ENCODE measurements at regions of chr2 and their contacts with region 1.

Region 1: GRCh38 chr2:43566461-43566729 is 29.4 kb downstream of the THADA start:
- DNase-seq: no peak
- ATAC-seq: no peak
- H3K4me3 ChIP-seq: no peak overlapping the region
- H3K27ac ChIP-seq: no peak overlapping the region
- H3K4me1 ChIP-seq: no peaks in the 10 kb centered on the region
- CTCF ChIP-seq: no peak
- EP300 ChIP-seq: no peak
- POLR2A ChIP-seq: no peak
- RAD21 ChIP-seq: no peak

Region 2: GRCh38 chr2:43576981-43577892 is 10.8 kb after region 1 on chr2:
- CTCF ChIA-PET with region 1: interaction called, 38 read pairs
- POLR2A ChIA-PET with region 1: no interaction called
- DNase-seq: peak; percentile 46 to 77
- ATAC-seq: peak; percentile 59 to 67; a peak in 5 of 6 replicates
- H3K4me3 ChIP-seq: no peak overlapping the region
- H3K27ac ChIP-seq: 0 out of 6 replicates have a peak overlapping the region, but pooled peaks of 1 of the 2 experiments have one; percentile 14
- H3K4me1 ChIP-seq: no peaks in the 10 kb centered on the region
- CTCF ChIP-seq: peak; percentile 93
- EP300 ChIP-seq: no peak
- POLR2A ChIP-seq: no peak
- RAD21 ChIP-seq: peak; percentile 37 to 47; a peak in 4 of 5 replicates

Measured in A549 (cell line).